ENCODE measurements at regions of chr18 and their contacts with region 1.

Region 1: DNA sequence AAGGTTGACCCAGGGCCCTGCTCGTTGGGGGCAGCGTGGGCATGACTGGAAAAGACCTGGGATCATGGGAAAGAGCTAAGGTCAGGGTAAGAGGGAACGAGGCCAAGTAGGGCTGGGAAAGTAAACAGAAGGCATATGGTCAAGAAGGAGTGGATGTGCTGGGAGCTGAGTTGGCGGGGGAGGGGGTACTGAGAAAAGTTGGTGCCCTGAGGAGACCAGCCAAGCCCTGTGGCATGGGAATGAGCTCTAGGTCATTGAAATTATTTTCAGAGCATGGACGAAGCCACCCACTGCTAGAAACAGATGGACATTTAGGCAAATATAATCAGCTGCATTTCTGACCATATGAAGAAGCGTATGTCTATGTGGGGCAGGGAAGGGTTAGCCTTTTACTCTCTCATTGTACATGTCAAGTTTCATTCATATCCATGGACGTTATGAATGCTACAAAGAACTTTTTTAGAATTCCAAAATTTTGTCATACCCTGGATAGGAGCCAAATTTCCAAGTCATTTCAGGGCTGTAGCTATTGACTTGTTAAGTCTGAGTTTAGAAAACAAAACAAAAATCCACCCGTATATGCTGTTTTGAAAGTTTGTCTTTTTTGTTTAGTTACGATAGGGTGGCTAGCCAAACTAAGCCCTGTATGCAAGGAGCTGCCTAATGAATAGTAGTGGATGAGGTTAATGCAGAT is 19.1 kb downstream of the MAPRE2 start:
- DNase-seq: no peak
- ATAC-seq: no peak
- H3K4me3 ChIP-seq: no peak overlapping the region
- H3K4me3 Mint-ChIP-seq: peak overlapping the region in 2 of 10 donors; percentile 21 to 27
- H3K27ac ChIP-seq: no peak overlapping the region
- H3K27ac Mint-ChIP-seq: peak overlapping the region in 5 of 9 donors; percentile 5 to 83 (median 41)
- H3K4me1 ChIP-seq: no peaks in the 10 kb centered on the region
- H3K4me1 Mint-ChIP-seq: peaks cover 0 to 95% (median 86%) of the 10 kb centered on the region in 7 donors
- H3K27me3 ChIP-seq: no peaks in the 10 kb centered on the region
- H3K27me3 Mint-ChIP-seq: no peaks in the 10 kb centered on the region

Region 2: DNA sequence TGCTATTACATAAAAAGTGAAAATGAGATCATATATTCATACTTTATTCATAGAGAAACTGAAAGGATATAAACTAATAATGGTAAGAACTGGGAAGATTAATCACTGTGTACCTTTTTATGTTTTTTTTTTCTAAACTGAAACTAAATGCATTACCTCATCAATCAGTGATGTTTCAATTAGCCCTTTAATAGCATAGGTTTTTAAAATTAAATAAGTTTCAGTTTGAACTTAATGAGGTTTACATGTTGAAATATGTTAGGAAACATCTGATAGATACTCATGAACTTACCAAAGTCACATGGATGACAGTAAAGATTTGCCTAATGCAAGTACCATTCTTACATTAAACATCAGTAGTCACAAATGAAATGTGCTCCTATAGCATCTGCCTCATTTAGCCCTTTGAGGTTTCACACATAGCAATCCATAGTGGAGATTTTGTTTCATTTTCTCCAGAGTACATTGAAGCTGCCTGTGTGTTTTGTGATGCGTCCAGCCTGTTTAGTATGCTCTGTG is 10.2 kb before region 1 on chr18:
- CTCF ChIA-PET with region 1: interaction called, 3 read pairs
- POLR2A ChIA-PET with region 1: interaction called, 4 read pairs
- intact Hi-C with region 1: loop called in 1 of 2 experiments (anchors 1 kb)
- DNase-seq: no peak
- ATAC-seq: peak; percentile 32
- H3K4me3 ChIP-seq: no peak overlapping the region
- H3K4me3 Mint-ChIP-seq: peak overlapping the region; percentile 5 to 86 (median 75)
- H3K27ac ChIP-seq: peak overlapping the region; percentile 40
- H3K27ac Mint-ChIP-seq: peak overlapping the region; percentile 30 to 94 (median 86)
- H3K4me1 ChIP-seq: peaks cover 11 to 46% of the 10 kb centered on the region in 2 donors
- H3K4me1 Mint-ChIP-seq: peaks cover 48 to 90% (median 86%) of the 10 kb centered on the region in 7 donors
- H3K27me3 ChIP-seq: no peaks in the 10 kb centered on the region
- H3K27me3 Mint-ChIP-seq: no peaks in the 10 kb centered on the region